T-cell (primary cell): ENCODE measurements at regions of chr1 and their contacts with region 1.

Region 1: DNA sequence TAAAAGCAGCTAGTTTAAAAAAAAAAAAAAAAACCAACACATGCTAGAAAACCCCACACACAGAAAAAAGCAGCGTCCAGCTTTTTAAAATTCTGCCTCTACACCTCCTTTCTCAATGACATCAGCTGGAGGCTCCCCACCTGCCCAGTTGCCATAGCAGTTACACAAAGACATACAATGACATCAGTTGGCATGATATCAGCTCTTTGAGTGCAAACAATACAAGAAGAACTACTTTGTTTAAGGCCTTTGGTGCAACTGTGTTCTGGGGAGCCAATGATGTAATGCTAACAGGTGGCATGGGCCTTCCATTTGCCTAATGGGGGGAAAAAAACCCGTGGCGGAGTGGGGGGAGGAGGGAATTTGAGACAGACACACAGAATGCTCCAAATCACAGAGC is 32.9 kb downstream of the DUSP10 start:
- DNase-seq: peak in 33 of 35 experiments; percentile 4 to 85 (median 56)
- ATAC-seq: peak in 1 of 4 experiments; percentile 60
- H3K4me3 ChIP-seq: no peak overlapping the region
- H3K4me3 Mint-ChIP-seq: no peak overlapping the region
- H3K27ac ChIP-seq: peak overlapping the region; percentile 77
- H3K27ac Mint-ChIP-seq: peak overlapping the region; percentile 71 to 80
- H3K4me1 ChIP-seq: peaks cover 30 to 37% of the 10 kb centered on the region in 2 experiments
- H3K4me1 Mint-ChIP-seq: peaks cover 54 to 74% (median 71%) of the 10 kb centered on the region in 3 donors
- H3K27me3 ChIP-seq: no peaks in the 10 kb centered on the region
- H3K27me3 Mint-ChIP-seq: no peaks in the 10 kb centered on the region

Region 2: GRCh38 chr1:221069178-221069903 is 639.6 kb before region 1 on chr1:
- CTCF ChIA-PET with region 1: no interaction called
- POLR2A ChIA-PET with region 1: no interaction called
- DNase-seq: no peak
- ATAC-seq: no peak
- H3K4me3 ChIP-seq: no peak overlapping the region
- H3K4me3 Mint-ChIP-seq: no peak overlapping the region
- H3K27ac ChIP-seq: no peak overlapping the region
- H3K27ac Mint-ChIP-seq: peak overlapping the region in 1 of 2 donors; percentile 2
- H3K4me1 ChIP-seq: no peaks in the 10 kb centered on the region
- H3K4me1 Mint-ChIP-seq: no peaks in the 10 kb centered on the region
- H3K27me3 ChIP-seq: no peaks in the 10 kb centered on the region
- H3K27me3 Mint-ChIP-seq: no peaks in the 10 kb centered on the region

Region 3: DNA sequence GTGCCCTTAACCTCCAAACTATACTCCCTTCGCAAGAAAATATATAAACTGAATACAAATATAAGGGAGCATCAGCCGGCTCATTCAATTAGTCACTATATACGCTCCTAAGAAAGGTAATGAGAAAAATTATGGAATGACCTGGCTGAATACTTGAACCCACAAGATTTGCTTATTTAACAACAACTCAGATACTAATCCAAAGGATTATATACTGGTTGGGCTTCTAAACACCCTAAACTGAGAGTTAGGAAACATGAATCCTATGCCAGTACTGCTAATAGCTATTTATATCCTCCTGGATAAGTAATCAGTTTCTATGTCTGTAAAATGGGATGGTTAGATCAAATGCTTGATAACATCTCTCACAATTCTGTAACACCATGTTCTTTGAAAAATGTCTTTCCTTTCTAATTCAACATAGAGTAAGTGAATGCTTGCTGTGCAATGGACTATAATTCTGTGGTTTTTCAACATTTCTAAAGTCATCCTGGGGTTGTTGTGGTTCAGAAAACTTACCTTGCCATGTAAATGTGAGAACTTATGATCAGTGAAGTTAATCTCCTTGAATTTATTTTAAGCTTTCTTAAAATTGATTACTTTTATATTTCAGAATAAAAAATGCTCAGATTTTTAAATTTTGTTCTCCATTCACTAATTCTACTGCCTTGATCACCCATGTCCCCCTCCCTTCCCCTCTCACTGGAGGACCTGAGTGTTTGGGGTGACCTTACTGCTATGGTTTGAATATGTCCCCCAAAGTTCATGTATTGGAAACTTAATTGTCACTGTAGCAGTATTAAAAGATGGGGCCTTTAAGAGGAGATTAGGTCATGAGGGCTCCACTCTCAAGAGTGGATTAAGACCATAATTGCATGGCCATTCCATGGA is 18.4 kb after region 1 on chr1:
- CTCF ChIA-PET with region 1: interaction called in 1 of 2 experiments, 6 read pairs
- POLR2A ChIA-PET with region 1: interaction called in 1 of 2 experiments, 26 read pairs
- DNase-seq: no peak
- ATAC-seq: peak in 1 of 4 experiments; percentile 33
- H3K4me3 ChIP-seq: no peak overlapping the region
- H3K4me3 Mint-ChIP-seq: peak overlapping the region in 2 of 3 donors; percentile 21 to 50
- H3K27ac ChIP-seq: peak overlapping the region; percentile 41
- H3K27ac Mint-ChIP-seq: peak overlapping the region; percentile 53 to 82
- H3K4me1 ChIP-seq: peaks cover 24 to 33% of the 10 kb centered on the region in 2 experiments
- H3K4me1 Mint-ChIP-seq: peaks cover 49 to 75% (median 71%) of the 10 kb centered on the region in 3 donors
- H3K27me3 ChIP-seq: no peaks in the 10 kb centered on the region
- H3K27me3 Mint-ChIP-seq: no peaks in the 10 kb centered on the region